Motor neuron (in vitro differentiated cells): ENCODE measurements at regions of chr20 and their contacts with region 1.

Region 1: DNA sequence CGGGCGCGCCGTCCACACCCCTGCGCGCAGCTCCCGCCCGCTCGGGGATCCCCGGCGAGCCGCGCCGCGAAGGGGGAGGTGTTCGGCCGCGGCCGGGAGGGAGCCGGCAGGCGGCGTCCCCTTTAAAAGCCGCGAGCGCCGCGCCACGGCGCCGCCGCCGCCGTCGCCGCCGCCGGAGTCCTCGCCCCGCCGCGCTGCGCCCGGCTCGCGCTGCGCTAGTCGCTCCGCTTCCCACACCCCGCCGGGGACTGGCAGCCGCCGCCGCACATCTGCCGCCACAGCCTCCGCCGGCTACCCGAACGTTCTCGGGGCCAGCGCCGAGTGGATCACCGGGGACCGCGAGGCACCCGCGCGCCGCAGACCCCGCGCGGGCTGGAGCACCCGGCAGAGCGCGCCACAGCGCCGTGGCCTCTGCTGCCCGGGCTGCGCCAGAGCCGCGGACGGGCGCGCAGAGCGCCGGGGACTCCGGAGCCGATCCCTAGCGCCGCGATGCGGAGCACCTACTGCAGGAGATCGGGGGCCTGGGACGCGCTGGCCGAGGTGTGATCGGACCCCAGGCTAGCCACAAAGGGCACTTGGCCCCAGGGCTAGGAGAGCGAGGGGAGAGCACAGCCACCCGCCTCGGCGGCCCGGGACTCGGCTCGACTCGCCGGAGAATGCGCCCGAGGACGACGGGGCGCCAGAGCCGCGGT is at the start of gene BMP2:
- ATAC-seq: peak; percentile 66 to 87 (median 84)
- H3K4me3 ChIP-seq: peak within 1 kb of the TSS; percentile 64 to 88 (median 70)
- H3K27ac ChIP-seq: no peak within 1 kb of the TSS
- H3K4me1 ChIP-seq: peaks cover 3 to 17% of the 10 kb centered on the region in 2 donors
- total RNA-seq, gene BMP2: 0.96 to 25.2 (median 3.1) TPM

Region 2: GRCh38 chr20:6044115-6044514 is 723.6 kb before region 1 on chr20:
- in situ Hi-C with region 1: no loop called
- ATAC-seq: peak in 3 of 8 experiments; percentile 5 to 28 (median 28)
- H3K4me3 ChIP-seq: no peak overlapping the region
- H3K27ac ChIP-seq: no peak overlapping the region
- H3K4me1 ChIP-seq: no peaks in the 10 kb centered on the region

Region 3: DNA sequence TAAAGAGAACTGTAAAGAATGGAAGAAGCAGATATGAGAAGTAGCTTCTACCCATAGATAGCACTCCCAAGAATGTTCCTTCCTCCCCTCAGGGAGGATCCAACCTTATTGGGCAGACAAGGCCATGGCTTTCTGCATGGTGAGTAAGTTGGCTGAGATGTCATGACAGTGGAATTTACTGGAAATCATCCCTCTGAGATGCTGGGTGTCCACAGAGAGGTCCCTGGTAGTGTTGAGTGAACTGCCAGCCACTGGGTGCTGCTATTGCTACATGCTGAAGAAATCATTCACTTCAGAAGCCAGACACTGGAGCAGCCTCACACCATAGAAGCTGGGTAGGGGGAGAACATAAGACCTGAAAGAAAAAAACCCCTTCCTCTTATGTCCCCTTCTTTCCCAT is 598.4 kb before region 1 on chr20:
- in situ Hi-C with region 1: loop called in 1 of 9 experiments (anchors 25 kb)
- ATAC-seq: peak in 3 of 8 experiments; percentile 30 to 78 (median 51)
- H3K4me3 ChIP-seq: no peak overlapping the region
- H3K27ac ChIP-seq: no peak overlapping the region
- H3K4me1 ChIP-seq: no peaks in the 10 kb centered on the region

Region 4: GRCh38 chr20:6265204-6265904 is 502.3 kb before region 1 on chr20:
- in situ Hi-C with region 1: loop called in 1 of 9 experiments (anchors 25 kb)
- ATAC-seq: peak in 3 of 8 experiments; percentile 69 to 94 (median 78)
- H3K4me3 ChIP-seq: no peak overlapping the region
- H3K27ac ChIP-seq: no peak overlapping the region
- H3K4me1 ChIP-seq: peaks cover 6 to 9% of the 10 kb centered on the region in 2 donors

Region 5: DNA sequence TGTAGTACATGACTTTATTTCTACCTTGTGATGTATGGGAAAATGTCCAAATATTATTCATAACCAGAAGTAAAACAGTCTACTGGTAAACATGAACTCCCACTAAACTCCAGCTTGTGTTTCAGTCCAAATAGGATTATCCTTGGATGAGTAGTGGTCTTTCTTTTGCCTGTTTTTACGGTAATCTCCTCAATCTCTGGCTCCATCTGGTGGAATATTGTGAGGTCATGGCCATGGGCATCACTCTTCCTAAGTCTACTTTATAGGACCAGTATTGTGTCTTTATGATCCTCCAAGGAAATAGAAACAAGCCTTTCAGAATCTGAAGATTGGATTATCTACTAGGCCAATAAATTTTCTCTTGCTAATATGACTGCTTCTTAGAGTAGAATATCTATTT is 504.8 kb after region 1 on chr20:
- in situ Hi-C with region 1: loop called in 2 of 9 experiments (anchors 25 kb)
- ATAC-seq: peak in 2 of 8 experiments; percentile 42 to 52
- H3K4me3 ChIP-seq: no peak overlapping the region
- H3K27ac ChIP-seq: no peak overlapping the region
- H3K4me1 ChIP-seq: no peaks in the 10 kb centered on the region

Region 6: GRCh38 chr20:7859356-7859802 is 1091.7 kb after region 1 on chr20:
- in situ Hi-C with region 1: loop called in 1 of 9 experiments (anchors 25 kb)
- ATAC-seq: peak in 4 of 8 experiments; percentile 45 to 92 (median 86)
- H3K4me3 ChIP-seq: no peak overlapping the region
- H3K27ac ChIP-seq: no peak overlapping the region
- H3K4me1 ChIP-seq: no peaks in the 10 kb centered on the region